Caco-2 (cell line): ENCODE measurements at regions of chr6 and their contacts with region 1.

Region 1: DNA sequence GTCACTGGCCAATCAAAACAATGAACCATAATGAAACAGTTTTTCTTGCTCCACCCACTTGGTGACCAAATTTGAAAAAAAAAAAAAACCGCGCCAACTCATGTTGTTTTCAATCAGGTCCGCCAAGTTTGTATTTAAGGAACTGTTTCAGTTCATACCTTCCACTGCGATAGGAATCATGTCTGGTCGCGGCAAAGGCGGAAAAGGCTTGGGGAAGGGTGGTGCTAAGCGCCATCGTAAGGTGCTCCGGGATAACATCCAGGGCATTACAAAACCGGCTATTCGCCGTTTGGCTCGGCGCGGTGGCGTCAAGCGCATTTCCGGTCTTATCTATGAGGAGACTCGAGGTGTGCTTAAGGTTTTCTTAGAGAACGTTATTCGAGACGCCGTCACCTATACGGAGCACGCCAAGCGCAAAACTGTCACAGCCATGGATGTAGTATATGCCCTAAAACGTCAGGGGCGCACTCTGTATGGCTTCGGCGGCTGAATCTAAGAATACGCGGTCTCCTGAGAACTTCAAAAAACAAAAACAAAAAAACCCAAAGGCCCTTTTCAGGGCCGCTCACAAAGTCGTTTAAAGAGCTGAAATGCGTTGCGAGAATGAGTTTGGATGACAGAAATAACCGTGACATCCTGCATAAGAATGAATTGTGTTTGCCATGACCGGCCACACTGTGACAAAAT is 16.7 kb downstream of the HFE start:
- DNase-seq: peak; percentile 91 to 92
- H3K4me3 ChIP-seq: peak overlapping the region; percentile 32
- H3K4me3 Mint-ChIP-seq: peak overlapping the region; percentile 80
- H3K27ac Mint-ChIP-seq: peak overlapping the region; percentile 98
- H3K4me1 ChIP-seq: peaks cover 18% of the 10 kb centered on the region
- H3K4me1 Mint-ChIP-seq: peaks cover 14% of the 10 kb centered on the region
- H3K27me3 ChIP-seq: no peaks in the 10 kb centered on the region
- H3K27me3 Mint-ChIP-seq: peaks cover 5% of the 10 kb centered on the region
- CTCF ChIP-seq: peak; percentile 21 to 27

Region 2: GRCh38 chr6:25899123-25899522 is 204.8 kb before region 1 on chr6:
- CTCF ChIA-PET with region 1: no interaction called
- POLR2A ChIA-PET with region 1: no interaction called
- intact Hi-C with region 1: no loop called
- DNase-seq: peak in 1 of 2 experiments; percentile 18
- H3K4me3 ChIP-seq: no peak overlapping the region
- H3K4me3 Mint-ChIP-seq: peak overlapping the region; percentile 48
- H3K27ac Mint-ChIP-seq: peak overlapping the region; percentile 58
- H3K4me1 ChIP-seq: peaks cover 30% of the 10 kb centered on the region
- H3K4me1 Mint-ChIP-seq: peaks cover 34% of the 10 kb centered on the region
- H3K27me3 ChIP-seq: no peaks in the 10 kb centered on the region
- H3K27me3 Mint-ChIP-seq: no peaks in the 10 kb centered on the region
- CTCF ChIP-seq: no peak

Region 3: DNA sequence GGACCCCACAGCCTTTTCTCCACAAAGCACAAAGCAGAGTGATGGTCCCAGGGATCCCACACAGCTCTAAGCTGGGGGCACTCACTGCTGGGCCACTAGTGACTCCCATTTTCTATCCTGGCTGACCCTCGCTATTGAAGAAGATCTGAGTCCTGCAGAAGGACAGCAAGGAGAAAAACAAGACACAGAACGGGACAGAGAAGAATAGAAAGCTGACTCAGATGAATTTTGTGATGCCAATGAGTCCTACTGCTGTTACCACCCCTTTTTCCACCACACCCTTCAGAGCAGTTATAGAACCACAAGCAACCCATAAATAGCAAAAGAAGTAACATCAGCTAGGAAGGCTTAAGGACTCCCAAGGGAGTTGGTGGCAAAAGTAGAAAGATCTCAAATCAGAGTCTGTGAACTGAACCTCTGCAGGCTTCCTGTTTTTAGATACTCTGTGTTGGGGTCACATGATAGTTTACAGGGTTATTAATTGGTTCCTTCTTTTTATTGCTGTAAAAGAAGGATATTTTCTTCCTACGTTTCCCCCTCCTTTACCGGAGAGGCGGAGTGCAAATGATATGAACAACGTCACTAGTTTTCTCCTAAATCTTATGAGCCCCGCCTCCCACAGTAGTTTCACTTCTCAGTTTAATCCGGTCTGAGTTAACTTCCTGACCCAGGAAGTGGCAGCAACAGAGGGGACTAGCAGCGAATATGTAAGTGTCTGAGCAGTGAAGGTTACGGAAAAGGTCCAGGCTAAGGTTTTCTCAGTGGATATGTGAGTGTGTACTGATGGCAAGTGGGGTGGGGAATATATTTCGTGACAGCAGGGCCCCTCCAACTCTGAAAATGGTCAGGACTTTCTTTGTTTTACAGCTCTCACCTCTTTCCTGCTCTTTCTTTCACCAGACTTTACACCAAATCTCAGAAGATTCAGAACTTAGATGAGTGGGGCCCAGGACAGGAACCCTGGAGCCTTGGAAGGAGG is 141.5 kb before region 1 on chr6 and contains the start of gene TRIM38:
- CTCF ChIA-PET with region 1: no interaction called
- POLR2A ChIA-PET with region 1: no interaction called
- intact Hi-C with region 1: no loop called
- DNase-seq: no peak
- H3K4me3 ChIP-seq: no peak within 1 kb of the TSS
- H3K4me3 Mint-ChIP-seq: peak within 1 kb of the TSS; percentile 64
- H3K27ac Mint-ChIP-seq: peak within 1 kb of the TSS; percentile 26
- H3K4me1 ChIP-seq: peaks cover 5% of the 10 kb centered on the region; the same call in 1 of the 2 replicates
- H3K4me1 Mint-ChIP-seq: peaks cover 17% of the 10 kb centered on the region
- H3K27me3 ChIP-seq: no peaks in the 10 kb centered on the region
- H3K27me3 Mint-ChIP-seq: no peaks in the 10 kb centered on the region
- CTCF ChIP-seq: no peak
- total RNA-seq, gene TRIM38: 0.53 and 0.70 TPM in 2 replicates

Region 4: DNA sequence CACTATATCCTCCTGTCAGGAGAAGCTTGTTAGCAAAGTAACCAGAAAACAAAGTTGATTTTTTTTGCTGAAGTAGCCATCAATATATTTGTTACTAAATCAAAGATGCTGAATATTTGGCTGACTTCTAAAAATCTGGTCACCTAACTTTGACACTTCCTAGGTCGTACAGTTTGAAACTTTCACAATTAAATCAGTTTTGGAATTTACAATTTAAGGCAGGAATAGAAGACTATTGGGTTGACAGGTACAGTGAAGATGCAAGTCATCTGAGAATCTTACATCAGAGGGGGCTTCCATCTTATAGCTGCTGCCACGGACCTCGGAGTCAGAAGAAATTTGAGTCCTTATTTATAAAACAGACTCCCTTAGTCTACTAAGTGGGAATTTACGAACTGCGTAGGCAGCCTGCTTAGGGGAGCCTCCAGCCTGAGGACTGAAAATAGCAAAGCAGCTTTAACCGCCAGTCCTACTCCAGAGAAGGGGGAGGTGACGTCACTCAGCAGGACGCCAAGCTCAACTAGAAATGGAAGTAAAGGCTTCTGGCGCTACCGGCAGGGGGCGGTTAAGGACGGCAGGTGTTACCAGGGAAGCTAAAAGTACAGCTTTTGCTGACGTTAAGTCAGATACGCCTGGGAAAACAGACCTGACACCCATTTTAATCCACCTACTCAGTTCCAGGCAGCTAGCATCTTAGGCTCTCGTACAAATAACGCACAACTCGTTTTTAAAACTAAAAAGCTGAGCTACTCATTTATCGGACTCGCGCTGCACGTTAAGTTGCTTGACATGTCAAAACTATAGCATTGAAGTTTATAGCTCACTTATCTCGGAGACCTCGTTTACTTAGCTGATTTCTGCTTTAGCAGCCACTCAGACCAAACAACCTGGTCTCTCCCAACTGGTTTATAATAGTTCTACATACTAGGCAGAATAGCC is 77.8 kb before region 1 on chr6:
- CTCF ChIA-PET with region 1: interaction called, 3 read pairs
- POLR2A ChIA-PET with region 1: interaction called, 8 read pairs
- intact Hi-C with region 1: loop called (anchors 2 kb)
- DNase-seq: peak; percentile 94 to 95
- H3K4me3 ChIP-seq: peak overlapping the region; percentile 74
- H3K4me3 Mint-ChIP-seq: peak overlapping the region; percentile 85
- H3K27ac Mint-ChIP-seq: peak overlapping the region; percentile 100
- H3K4me1 ChIP-seq: peaks cover 18% of the 10 kb centered on the region; the same call in 1 of the 2 replicates
- H3K4me1 Mint-ChIP-seq: peaks cover 35% of the 10 kb centered on the region
- H3K27me3 ChIP-seq: no peaks in the 10 kb centered on the region
- H3K27me3 Mint-ChIP-seq: peaks cover 4% of the 10 kb centered on the region
- CTCF ChIP-seq: peak; percentile 81 to 87

Region 5: GRCh38 chr6:26031595-26032339 is 72.1 kb before region 1 on chr6:
- CTCF ChIA-PET with region 1: no interaction called
- POLR2A ChIA-PET with region 1: interaction called, 24 read pairs
- intact Hi-C with region 1: loop called (anchors 1 kb)
- DNase-seq: peak; percentile 95 to 96
- H3K4me3 ChIP-seq: peak overlapping the region; percentile 66
- H3K4me3 Mint-ChIP-seq: peak overlapping the region; percentile 87
- H3K27ac Mint-ChIP-seq: peak overlapping the region; percentile 100
- H3K4me1 ChIP-seq: peaks cover 9% of the 10 kb centered on the region
- H3K4me1 Mint-ChIP-seq: peaks cover 51% of the 10 kb centered on the region
- H3K27me3 ChIP-seq: no peaks in the 10 kb centered on the region
- H3K27me3 Mint-ChIP-seq: peaks cover 4% of the 10 kb centered on the region
- CTCF ChIP-seq: no peak

Region 6: DNA sequence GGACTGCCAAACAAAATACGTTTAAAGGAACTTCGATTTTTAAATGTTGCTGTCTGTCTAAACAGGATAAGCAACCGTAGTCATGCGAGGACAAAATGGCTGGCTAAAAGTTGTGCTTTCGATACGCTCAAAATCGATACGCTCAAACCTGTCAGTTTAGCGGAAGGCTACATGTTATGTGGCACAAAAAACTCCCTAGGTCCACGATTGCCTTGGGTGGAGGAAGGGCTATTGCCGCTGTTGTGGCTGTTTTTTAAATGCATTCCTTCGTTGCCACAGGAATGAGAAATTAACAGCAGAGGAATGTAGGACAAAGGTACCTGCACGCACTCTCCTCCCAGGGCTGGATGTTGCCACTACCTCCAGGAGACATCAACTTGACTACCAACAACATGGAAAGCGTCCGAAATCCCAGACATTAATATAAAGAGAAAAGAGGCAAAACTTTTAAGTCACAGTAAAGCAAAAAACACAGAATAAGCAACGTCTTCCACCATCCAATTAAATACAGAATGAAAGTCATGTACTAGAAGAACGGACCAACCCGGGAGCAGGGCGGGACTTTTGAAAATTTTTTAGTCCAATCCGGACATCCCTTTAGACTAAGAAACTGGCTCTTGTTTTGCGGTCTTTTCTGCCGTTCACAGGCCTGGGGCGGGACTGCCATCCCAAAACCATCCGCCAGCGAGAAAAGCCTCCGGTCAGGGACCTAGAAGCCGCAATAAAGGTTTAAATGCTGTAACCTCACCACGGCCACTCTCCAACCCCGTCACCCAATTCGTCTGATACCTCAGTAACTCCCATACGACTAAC is 48.9 kb before region 1 on chr6:
- CTCF ChIA-PET with region 1: no interaction called
- POLR2A ChIA-PET with region 1: interaction called, 19 read pairs
- intact Hi-C with region 1: loop called (anchors 2 kb)
- DNase-seq: peak; percentile 87 to 90
- H3K4me3 ChIP-seq: peak overlapping the region; percentile 64
- H3K4me3 Mint-ChIP-seq: peak overlapping the region; percentile 83
- H3K27ac Mint-ChIP-seq: peak overlapping the region; percentile 93
- H3K4me1 ChIP-seq: peaks cover 8% of the 10 kb centered on the region
- H3K4me1 Mint-ChIP-seq: peaks cover 6% of the 10 kb centered on the region
- H3K27me3 ChIP-seq: no peaks in the 10 kb centered on the region
- H3K27me3 Mint-ChIP-seq: no peaks in the 10 kb centered on the region
- CTCF ChIP-seq: peak in 1 of 2 experiments; percentile 14

Region 7: GRCh38 chr6:26156076-26156849 is 52.4 kb after region 1 on chr6:
- CTCF ChIA-PET with region 1: no interaction called
- POLR2A ChIA-PET with region 1: interaction called, 40 read pairs
- intact Hi-C with region 1: loop called (anchors 1 kb)
- DNase-seq: peak; percentile 86 to 93
- H3K4me3 ChIP-seq: peak overlapping the region; percentile 64
- H3K4me3 Mint-ChIP-seq: peak overlapping the region; percentile 86
- H3K27ac Mint-ChIP-seq: peak overlapping the region; percentile 98
- H3K4me1 ChIP-seq: peaks cover 10% of the 10 kb centered on the region
- H3K4me1 Mint-ChIP-seq: peaks cover 45% of the 10 kb centered on the region
- H3K27me3 ChIP-seq: no peaks in the 10 kb centered on the region
- H3K27me3 Mint-ChIP-seq: peaks cover 15% of the 10 kb centered on the region
- CTCF ChIP-seq: no peak